ENCODE measurements at regions of chr2 and their contacts with region 1.

Region 1: GRCh38 chr2:172484253-172484652 is 56.9 kb downstream of the ITGA6 start:
- DNase-seq: peak in 2 of 4 experiments; percentile 20 to 35
- ATAC-seq: peak; percentile 42; the same call in 2 of the 3 replicates
- H3K4me3 ChIP-seq: no peak overlapping the region
- H3K27ac ChIP-seq: no peak overlapping the region
- H3K4me1 ChIP-seq: no peaks in the 10 kb centered on the region
- H3K27me3 ChIP-seq: peaks cover 14 to 24% of the 10 kb centered on the region in 2 experiments; a peak in 4 of 5 replicates
- CTCF ChIP-seq: peak; percentile 24 to 59 (median 39); a peak in 4 of 6 replicates
- EP300 ChIP-seq: no peak
- POLR2A ChIP-seq: no peak
- RAD21 ChIP-seq: peak; percentile 43 to 60

Region 2: GRCh38 chr2:172693037-172693436 is 208.8 kb after region 1 on chr2:
- CTCF ChIA-PET with region 1: no interaction called
- POLR2A ChIA-PET with region 1: no interaction called
- in situ Hi-C with region 1: no loop called
- intact Hi-C with region 1: no loop called
- DNase-seq: no peak
- ATAC-seq: no peak
- H3K4me3 ChIP-seq: no peak overlapping the region
- H3K27ac ChIP-seq: no peak overlapping the region
- H3K4me1 ChIP-seq: no peaks in the 10 kb centered on the region
- H3K27me3 ChIP-seq: 0 out of 5 replicates have a peak, but pooled peaks cover 0 to 5% of the 10 kb centered on the region in 2 experiments
- CTCF ChIP-seq: no peak
- EP300 ChIP-seq: no peak
- POLR2A ChIP-seq: no peak
- RAD21 ChIP-seq: no peak

Region 3: DNA sequence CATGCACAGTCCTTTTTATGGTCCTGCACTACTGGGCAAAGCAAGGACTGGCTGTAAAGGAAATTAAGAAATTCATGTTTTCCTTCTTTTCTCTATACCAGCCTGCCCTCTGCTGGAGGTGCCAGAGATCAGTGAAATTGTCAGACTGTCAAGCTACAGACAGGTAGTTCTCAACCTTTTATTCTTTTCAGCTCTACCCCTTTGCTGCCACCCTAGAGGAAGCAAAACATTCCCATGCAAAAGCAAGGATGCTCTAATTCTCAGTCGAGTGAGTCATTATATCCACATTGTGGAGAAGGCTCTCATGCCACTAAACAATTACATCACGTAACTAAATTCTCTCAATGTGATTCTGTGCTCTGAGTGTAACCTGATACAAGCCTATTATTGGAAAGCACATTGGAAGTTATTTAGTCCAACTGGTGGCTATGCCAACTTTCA is 226.4 kb after region 1 on chr2:
- CTCF ChIA-PET with region 1: no interaction called
- POLR2A ChIA-PET with region 1: no interaction called
- in situ Hi-C with region 1: no loop called
- intact Hi-C with region 1: loop called (anchors 5 kb)
- DNase-seq: peak in 3 of 4 experiments; percentile 14 to 37 (median 34)
- ATAC-seq: peak; percentile 67; the same call in 2 of the 3 replicates
- H3K4me3 ChIP-seq: no peak overlapping the region
- H3K27ac ChIP-seq: no peak overlapping the region
- H3K4me1 ChIP-seq: peaks cover 0 to 3% of the 10 kb centered on the region in 2 experiments; a peak in 1 of 5 replicates
- H3K27me3 ChIP-seq: peaks cover 0 to 26% of the 10 kb centered on the region in 2 experiments; a peak in 2 of 5 replicates
- CTCF ChIP-seq: peak; percentile 56 to 74 (median 62)
- EP300 ChIP-seq: no peak
- POLR2A ChIP-seq: no peak
- RAD21 ChIP-seq: peak; percentile 48 to 69

Region 4: GRCh38 chr2:172845028-172845630 is 360.9 kb after region 1 on chr2:
- CTCF ChIA-PET with region 1: no interaction called
- POLR2A ChIA-PET with region 1: no interaction called
- in situ Hi-C with region 1: no loop called
- intact Hi-C with region 1: no loop called
- DNase-seq: no peak
- ATAC-seq: no peak
- H3K4me3 ChIP-seq: no peak overlapping the region
- H3K27ac ChIP-seq: no peak overlapping the region
- H3K4me1 ChIP-seq: no peaks in the 10 kb centered on the region
- H3K27me3 ChIP-seq: peaks cover 0 to 9% of the 10 kb centered on the region in 2 experiments; a peak in 2 of 5 replicates
- CTCF ChIP-seq: no peak
- EP300 ChIP-seq: no peak
- POLR2A ChIP-seq: no peak
- RAD21 ChIP-seq: no peak

Measured in K562 (cell line).